Natural killer cell (primary cell): ENCODE measurements at regions of chr1 and their contacts with region 1.

Region 1: DNA sequence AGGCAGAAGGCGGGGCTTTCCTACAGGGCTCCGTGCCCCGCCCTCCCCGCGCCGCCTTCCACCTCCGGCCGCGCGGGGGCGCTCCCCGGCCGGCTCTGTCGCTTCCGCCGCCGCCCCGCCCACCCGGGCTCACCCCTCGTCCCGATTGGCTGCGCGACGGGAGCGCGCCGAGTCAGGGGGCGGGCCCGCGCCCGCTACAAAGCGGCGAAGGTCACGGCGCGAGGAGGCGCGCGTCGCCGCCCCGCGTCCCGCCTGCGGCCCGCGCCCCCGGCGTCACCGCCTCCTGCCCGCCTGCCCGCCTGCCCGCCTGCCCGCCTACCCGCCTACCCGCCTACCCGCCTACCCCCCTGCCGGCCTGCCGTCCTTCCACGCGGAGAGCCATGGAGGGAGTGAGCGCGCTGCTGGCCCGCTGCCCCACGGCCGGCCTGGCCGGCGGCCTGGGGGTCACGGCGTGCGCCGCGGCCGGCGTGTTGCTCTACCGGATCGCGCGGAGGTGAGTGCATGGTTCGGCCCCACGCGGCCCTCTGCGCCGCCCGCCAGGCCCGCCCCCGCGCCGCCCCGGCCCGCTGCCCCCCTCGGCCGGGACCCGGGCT is at the start of gene TMEM201:
- DNase-seq: peak; percentile 96 to 97
- ATAC-seq: peak; percentile 92 to 98 (median 95)
- H3K4me3 ChIP-seq: peak within 1 kb of the TSS; percentile 52
- H3K4me3 Mint-ChIP-seq: peak within 1 kb of the TSS; percentile 82
- H3K27ac ChIP-seq: no peak within 1 kb of the TSS
- H3K27ac Mint-ChIP-seq: peak within 1 kb of the TSS; percentile 48 to 50
- H3K4me1 ChIP-seq: peaks cover 41% of the 10 kb centered on the region
- H3K4me1 Mint-ChIP-seq: peaks cover 8 to 31% of the 10 kb centered on the region in 2 donors
- H3K27me3 ChIP-seq: no peaks in the 10 kb centered on the region
- H3K27me3 Mint-ChIP-seq: no peaks in the 10 kb centered on the region
- CTCF ChIP-seq: peak; percentile 80
- total RNA-seq, gene TMEM201: 7.3 to 10.2 (median 8.8) TPM

Region 2: GRCh38 chr1:9539165-9539828 is 49.4 kb before region 1 on chr1 and contains the start of gene SLC25A33:
- intact Hi-C with region 1: loop called (anchors 1 kb)
- DNase-seq: peak; percentile 97 to 99
- ATAC-seq: peak; percentile 95 to 100 (median 96)
- H3K4me3 ChIP-seq: peak within 1 kb of the TSS; percentile 78
- H3K4me3 Mint-ChIP-seq: peak within 1 kb of the TSS; percentile 89
- H3K27ac ChIP-seq: peak within 1 kb of the TSS; percentile 68
- H3K27ac Mint-ChIP-seq: peak within 1 kb of the TSS; percentile 87 to 91
- H3K4me1 ChIP-seq: peaks cover 14% of the 10 kb centered on the region
- H3K4me1 Mint-ChIP-seq: peaks cover 12 to 27% of the 10 kb centered on the region in 2 donors
- H3K27me3 ChIP-seq: no peaks in the 10 kb centered on the region
- H3K27me3 Mint-ChIP-seq: no peaks in the 10 kb centered on the region
- CTCF ChIP-seq: no peak
- total RNA-seq, gene SLC25A33: 7.0 to 9.0 (median 7.6) TPM

Region 3: DNA sequence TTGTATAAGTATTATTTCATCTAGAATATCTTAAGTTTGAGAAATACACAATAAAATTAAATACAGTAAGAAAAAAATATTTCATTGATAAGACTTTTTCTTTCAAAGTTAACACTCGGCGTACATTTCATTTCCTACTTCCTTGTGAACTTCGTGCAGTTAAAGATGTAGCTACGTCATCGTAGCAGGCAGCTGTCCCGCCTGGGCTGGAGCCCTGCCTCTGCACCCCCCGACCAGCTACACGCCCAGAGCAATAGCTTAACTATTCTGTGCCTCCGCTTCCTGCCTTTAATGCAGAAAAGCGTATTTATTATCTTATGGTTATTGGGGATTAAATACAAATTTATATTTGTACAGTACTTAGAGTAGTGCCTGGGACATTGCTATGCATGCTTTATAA is 181.7 kb after region 1 on chr1:
- intact Hi-C with region 1: no loop called
- DNase-seq: no peak
- ATAC-seq: no peak
- H3K4me3 ChIP-seq: no peak overlapping the region
- H3K4me3 Mint-ChIP-seq: no peak overlapping the region
- H3K27ac ChIP-seq: no peak overlapping the region
- H3K27ac Mint-ChIP-seq: no peak overlapping the region
- H3K4me1 ChIP-seq: no peaks in the 10 kb centered on the region
- H3K4me1 Mint-ChIP-seq: peaks cover 8 to 11% of the 10 kb centered on the region in 2 donors
- H3K27me3 ChIP-seq: no peaks in the 10 kb centered on the region
- H3K27me3 Mint-ChIP-seq: no peaks in the 10 kb centered on the region
- CTCF ChIP-seq: no peak

Region 4: DNA sequence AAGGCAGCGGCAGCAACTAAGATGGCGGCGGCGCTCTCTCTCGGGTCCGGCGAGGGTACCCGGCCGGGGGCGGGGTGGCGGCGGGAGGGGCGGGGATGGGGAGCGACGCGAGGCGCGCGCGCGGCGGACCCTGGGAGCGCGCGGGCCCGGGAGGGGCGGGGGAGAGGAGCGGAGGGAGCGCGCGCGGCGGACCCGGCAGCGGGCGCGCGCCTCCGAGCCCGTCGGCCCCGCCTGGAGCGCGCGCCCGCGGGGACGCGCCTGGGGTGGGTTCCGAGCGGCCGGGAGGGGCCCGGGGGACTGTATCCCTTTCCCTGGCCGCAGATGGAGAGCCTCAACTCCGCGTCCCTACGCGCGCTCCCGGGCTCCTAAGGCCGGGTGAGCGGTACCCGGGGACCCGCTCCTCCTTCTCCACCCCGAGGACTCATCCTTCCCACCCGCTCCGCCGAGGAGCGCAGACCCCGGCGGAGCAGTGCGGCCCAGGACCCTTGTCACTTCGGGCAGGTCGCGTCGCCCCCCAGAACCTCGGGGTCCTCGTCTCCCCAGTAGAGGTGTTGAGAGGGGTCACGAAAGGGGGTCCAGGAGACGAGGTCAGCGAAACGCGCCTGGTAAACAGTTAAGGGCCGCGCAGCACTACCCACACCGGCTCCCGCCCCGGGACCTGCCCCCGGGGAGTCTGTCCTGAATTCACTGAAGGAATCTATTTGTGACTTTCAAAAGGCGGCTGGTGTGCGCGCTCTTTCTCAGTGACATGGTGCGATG is 235.5 kb after region 1 on chr1 and contains the start of gene CLSTN1:
- intact Hi-C with region 1: loop called (anchors 5 kb)
- DNase-seq: peak; percentile 76 to 92
- ATAC-seq: peak; percentile 77 to 89 (median 85)
- H3K4me3 ChIP-seq: peak within 1 kb of the TSS; percentile 70
- H3K4me3 Mint-ChIP-seq: peak within 1 kb of the TSS; percentile 93
- H3K27ac ChIP-seq: peak within 1 kb of the TSS; percentile 77
- H3K27ac Mint-ChIP-seq: peak within 1 kb of the TSS; percentile 78 to 83
- H3K4me1 ChIP-seq: peaks cover 28% of the 10 kb centered on the region
- H3K4me1 Mint-ChIP-seq: peaks cover 35 to 40% of the 10 kb centered on the region in 2 donors
- H3K27me3 ChIP-seq: no peaks in the 10 kb centered on the region
- H3K27me3 Mint-ChIP-seq: no peaks in the 10 kb centered on the region
- CTCF ChIP-seq: no peak
- total RNA-seq, gene CLSTN1: 83.1 to 114 (median 94.5) TPM